Dorsolateral prefrontal cortex (tissue), 120 donors: ENCODE measurements at regions of chr10 and their contacts with region 1.

Region 1: DNA sequence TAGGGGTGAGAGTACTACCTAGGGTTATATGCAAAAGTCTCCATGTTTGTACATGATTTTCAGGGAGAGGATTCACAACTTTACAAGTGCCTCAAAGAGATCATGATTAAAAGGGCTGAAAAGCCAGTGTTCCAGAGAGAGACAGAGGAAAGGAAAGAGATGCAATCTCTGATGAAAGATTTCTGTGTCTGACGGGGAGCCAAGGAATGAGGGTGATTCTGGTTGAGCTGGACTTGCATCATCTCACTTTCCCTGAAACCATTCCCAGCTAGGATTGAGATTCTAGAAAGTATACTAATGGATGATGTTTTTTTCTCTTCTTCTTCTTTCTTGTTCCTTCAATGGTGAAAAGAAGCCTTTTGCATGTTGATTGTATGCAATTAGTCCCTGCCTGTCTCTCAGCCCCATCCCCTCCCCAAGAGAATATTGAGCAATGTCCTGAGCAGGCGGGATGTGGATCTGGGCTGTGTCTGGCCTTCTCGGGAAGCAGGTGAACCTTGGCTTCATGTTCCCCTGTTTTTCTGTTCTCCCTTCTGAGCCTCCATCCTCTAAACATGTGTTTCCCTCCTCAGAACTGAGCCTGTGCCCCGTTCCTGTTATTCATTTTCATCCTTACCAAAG is 186.1 kb downstream of the ZNF365 start:
- DNase-seq: no peak
- H3K4me3 ChIP-seq: no peak overlapping the region
- H3K27ac ChIP-seq: no peak overlapping the region
- H3K27me3 ChIP-seq: no peaks in the 10 kb centered on the region
- CTCF ChIP-seq: no peak

Region 2: GRCh38 chr10:61903221-61903927 is 656.9 kb before region 1 on chr10:
- intact Hi-C with region 1: no loop called
- DNase-seq: peak in 9 of 10 donors; percentile 30 to 72 (median 51)
- H3K4me3 ChIP-seq: peak overlapping the region; percentile 54 to 98 (median 85)
- H3K27ac ChIP-seq: peak overlapping the region; percentile 74 to 99 (median 95)
- H3K27me3 ChIP-seq: no peaks in the 10 kb centered on the region
- CTCF ChIP-seq: peak in 47 of 56 donors; percentile 18 to 64 (median 44)

Region 3: DNA sequence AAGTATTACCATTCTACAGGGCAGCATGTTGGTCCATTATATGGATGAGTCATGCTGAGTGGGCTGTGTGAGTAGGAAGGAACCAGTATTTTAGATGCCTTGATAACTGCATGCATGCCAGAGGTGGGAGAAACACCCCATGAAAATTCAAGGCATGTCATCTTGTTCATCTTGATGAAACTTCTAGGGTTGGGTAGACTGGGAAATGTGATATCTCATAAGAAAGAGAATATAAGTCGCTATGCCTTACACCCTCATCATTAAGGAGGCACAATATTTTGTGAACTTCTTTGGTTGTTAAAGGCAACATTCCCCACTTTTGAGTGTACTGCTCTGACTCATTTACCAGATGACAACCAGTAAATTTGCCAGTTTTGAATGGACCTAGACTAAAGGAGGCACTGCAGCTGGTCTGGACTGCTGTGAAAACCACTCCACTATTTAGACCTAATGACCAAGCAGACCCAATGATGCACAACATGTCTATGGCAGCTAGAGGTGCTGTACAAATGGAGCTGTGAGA is 138.2 kb before region 1 on chr10:
- intact Hi-C with region 1: no loop called
- DNase-seq: no peak
- H3K4me3 ChIP-seq: no peak overlapping the region
- H3K27ac ChIP-seq: no peak overlapping the region
- H3K27me3 ChIP-seq: no peaks in the 10 kb centered on the region
- CTCF ChIP-seq: no peak

Region 4: GRCh38 chr10:62618576-62619412 is 58.5 kb after region 1 on chr10:
- intact Hi-C with region 1: no loop called
- DNase-seq: no peak
- H3K4me3 ChIP-seq: no peak overlapping the region
- H3K27ac ChIP-seq: peak overlapping the region in 2 of 59 donors; percentile 6 to 43
- H3K27me3 ChIP-seq: no peaks in the 10 kb centered on the region
- CTCF ChIP-seq: no peak

Region 5: DNA sequence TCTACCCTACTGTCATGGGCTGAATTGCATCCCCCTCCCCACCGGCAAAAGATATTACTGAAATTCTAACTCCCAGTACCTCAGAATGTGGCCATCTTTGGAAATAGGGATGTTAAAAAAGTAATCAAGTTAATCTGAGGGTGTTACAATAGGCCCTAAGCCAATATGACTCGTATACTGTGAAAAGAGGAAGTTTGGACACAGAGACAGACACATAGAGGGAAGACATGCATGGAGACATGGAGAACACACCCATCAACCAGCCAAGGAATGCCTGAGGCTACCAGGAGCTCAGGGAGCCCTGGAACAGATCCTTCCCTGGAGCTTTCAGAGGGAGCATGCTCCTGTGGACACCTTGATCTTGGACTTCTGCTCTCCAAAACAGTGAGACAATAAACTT is 106.0 kb after region 1 on chr10:
- intact Hi-C with region 1: loop called in 1 of 2 experiments (anchors 10 kb)
- DNase-seq: no peak
- H3K4me3 ChIP-seq: peak overlapping the region in 1 of 59 donors; percentile 2
- H3K27ac ChIP-seq: peak overlapping the region in 8 of 59 donors; percentile 5 to 55 (median 30)
- H3K27me3 ChIP-seq: no peaks in the 10 kb centered on the region
- CTCF ChIP-seq: no peak